ENCODE measurements at regions of chr15 and their contacts with region 1.

Region 1: GRCh38 chr15:35545824-35546510 is at the start of gene DPH6:
- DNase-seq: peak; percentile 87
- ATAC-seq: peak; percentile 89
- H3K4me3 Mint-ChIP-seq: peak within 1 kb of the TSS; percentile 95
- H3K27ac Mint-ChIP-seq: peak within 1 kb of the TSS; percentile 99
- H3K4me1 Mint-ChIP-seq: peaks cover 23% of the 10 kb centered on the region
- H3K27me3 Mint-ChIP-seq: no peaks in the 10 kb centered on the region
- total RNA-seq, gene DPH6: 8.1 to 14.0 TPM

Region 2: GRCh38 chr15:34437687-34438086 is 1108.3 kb before region 1 on chr15 and contains the start of gene GOLGA8A:
- CTCF ChIA-PET with region 1: no interaction called
- POLR2A ChIA-PET with region 1: no interaction called
- intact Hi-C with region 1: loop called in 1 of 2 experiments (anchors 5 kb)
- DNase-seq: peak; percentile 94
- ATAC-seq: peak; percentile 85
- H3K4me3 Mint-ChIP-seq: peak within 1 kb of the TSS; percentile 86
- H3K27ac Mint-ChIP-seq: peak within 1 kb of the TSS; percentile 95
- H3K4me1 Mint-ChIP-seq: peaks cover 18% of the 10 kb centered on the region
- H3K27me3 Mint-ChIP-seq: peaks cover under 1% of the 10 kb centered on the region
- total RNA-seq, gene GOLGA8A: 147 to 165 TPM

Region 3: DNA sequence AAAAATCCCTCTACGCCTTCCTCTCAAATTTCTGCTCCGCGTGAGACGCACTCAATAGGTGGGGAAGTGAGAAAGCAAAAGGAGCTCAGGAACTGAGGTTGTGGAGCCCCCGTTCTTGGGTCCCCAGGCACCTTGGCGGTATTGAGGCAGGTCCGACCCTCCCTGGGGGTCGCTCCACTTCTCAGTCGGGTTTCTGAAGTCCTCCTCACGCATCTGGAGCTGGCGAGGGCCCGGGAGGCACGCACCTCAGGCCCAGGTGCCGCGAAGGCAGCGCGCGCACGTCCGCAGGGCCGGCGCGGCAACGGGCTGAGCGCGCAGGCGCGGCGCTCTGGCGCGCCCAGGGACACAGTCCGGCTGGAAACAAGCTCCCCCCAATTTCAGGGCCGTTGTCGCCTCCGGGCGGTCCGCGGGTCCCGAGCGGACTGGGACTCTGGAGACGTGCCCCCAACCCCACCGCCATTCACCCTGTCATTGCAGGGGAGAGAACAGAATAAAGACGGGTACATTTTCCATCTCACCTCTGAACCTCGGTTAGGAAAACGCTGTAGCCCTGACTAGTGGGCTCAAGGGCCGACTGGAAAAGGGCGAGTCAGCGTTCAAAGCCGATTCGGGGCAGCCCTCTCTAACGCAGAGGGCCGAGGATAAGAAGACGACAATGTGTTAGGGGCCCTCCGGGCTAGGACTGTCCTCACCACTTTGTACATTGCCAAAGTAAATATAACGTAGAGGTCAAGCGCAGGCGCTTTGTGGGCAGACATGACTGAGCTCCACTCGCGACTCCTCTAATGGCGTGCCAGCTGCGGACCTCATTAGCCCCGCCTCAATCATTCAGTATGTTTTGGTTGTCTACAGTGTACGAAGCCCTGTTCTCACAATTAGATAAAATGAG is 557.7 kb before region 1 on chr15 and contains the start of gene ZNF770:
- CTCF ChIA-PET with region 1: no interaction called
- POLR2A ChIA-PET with region 1: no interaction called
- intact Hi-C with region 1: loop called (anchors 1 to 5 kb)
- DNase-seq: peak; percentile 88
- ATAC-seq: peak; percentile 87
- H3K4me3 Mint-ChIP-seq: peak within 1 kb of the TSS; percentile 97
- H3K27ac Mint-ChIP-seq: peak within 1 kb of the TSS; percentile 98
- H3K4me1 Mint-ChIP-seq: peaks cover 35% of the 10 kb centered on the region
- H3K27me3 Mint-ChIP-seq: no peaks in the 10 kb centered on the region
- total RNA-seq, gene ZNF770: 64.1 to 65.1 TPM

Region 4: GRCh38 chr15:35557544-35557943 is 11.6 kb after region 1 on chr15:
- CTCF ChIA-PET with region 1: no interaction called
- POLR2A ChIA-PET with region 1: interaction called, 10 read pairs
- intact Hi-C with region 1: no loop called
- DNase-seq: peak; percentile 8
- ATAC-seq: peak; percentile 88
- H3K4me3 Mint-ChIP-seq: no peak overlapping the region
- H3K27ac Mint-ChIP-seq: peak overlapping the region; percentile 27
- H3K4me1 Mint-ChIP-seq: peaks cover 11% of the 10 kb centered on the region
- H3K27me3 Mint-ChIP-seq: peaks cover 2% of the 10 kb centered on the region

Region 5: GRCh38 chr15:35657679-35658311 is 111.8 kb after region 1 on chr15:
- CTCF ChIA-PET with region 1: no interaction called
- POLR2A ChIA-PET with region 1: no interaction called
- intact Hi-C with region 1: loop called (anchors 1 to 5 kb)
- DNase-seq: peak; percentile 65
- ATAC-seq: peak; percentile 94
- H3K4me3 Mint-ChIP-seq: no peak overlapping the region
- H3K27ac Mint-ChIP-seq: no peak overlapping the region
- H3K4me1 Mint-ChIP-seq: peaks cover 9% of the 10 kb centered on the region
- H3K27me3 Mint-ChIP-seq: peaks cover 16% of the 10 kb centered on the region

Region 6: DNA sequence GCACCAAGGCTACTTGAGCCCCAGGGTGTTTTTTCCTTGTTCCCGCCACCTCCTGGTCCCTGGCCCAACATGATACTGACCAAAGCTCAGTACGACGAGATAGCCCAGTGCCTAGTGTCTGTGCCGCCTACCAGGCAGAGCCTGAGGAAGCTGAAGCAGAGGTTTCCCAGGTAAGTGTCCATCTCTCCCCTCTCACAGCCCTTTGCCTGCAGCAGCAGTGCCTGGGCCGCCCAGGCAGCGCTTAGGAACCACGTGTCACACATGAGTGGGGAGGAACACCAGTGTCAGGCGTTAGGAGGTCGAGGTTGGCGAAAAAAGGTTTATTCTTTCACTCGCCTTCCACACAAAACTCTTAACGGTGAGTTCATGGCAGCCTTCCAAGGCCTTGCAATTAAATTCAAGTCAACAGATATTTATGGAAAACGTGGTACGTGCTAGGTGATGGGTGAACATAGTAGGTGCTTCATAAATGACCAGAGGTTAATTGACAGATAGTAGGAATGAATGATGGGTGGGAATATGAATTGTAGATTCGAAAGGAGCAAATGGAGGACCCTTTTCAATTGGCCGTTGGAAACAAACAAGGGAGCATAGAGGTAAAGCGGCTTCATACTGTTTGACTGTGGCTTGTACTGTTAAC is 1033.9 kb after region 1 on chr15:
- CTCF ChIA-PET with region 1: no interaction called
- POLR2A ChIA-PET with region 1: no interaction called
- intact Hi-C with region 1: loop called (anchors 1 to 5 kb)
- DNase-seq: peak; percentile 53
- ATAC-seq: peak; percentile 23
- H3K4me3 Mint-ChIP-seq: peak overlapping the region; percentile 81
- H3K27ac Mint-ChIP-seq: peak overlapping the region; percentile 93
- H3K4me1 Mint-ChIP-seq: peaks cover 24% of the 10 kb centered on the region
- H3K27me3 Mint-ChIP-seq: peaks cover 2% of the 10 kb centered on the region

Region 7: GRCh38 chr15:37100109-37100965 is 1554.4 kb after region 1 on chr15 and contains the start of gene MEIS2:
- CTCF ChIA-PET with region 1: no interaction called
- POLR2A ChIA-PET with region 1: no interaction called
- intact Hi-C with region 1: loop called in 1 of 2 experiments (anchors 2 kb)
- DNase-seq: peak; percentile 70
- ATAC-seq: peak; percentile 63
- H3K4me3 Mint-ChIP-seq: peak within 1 kb of the TSS; percentile 80
- H3K27ac Mint-ChIP-seq: peak within 1 kb of the TSS; percentile 51
- H3K4me1 Mint-ChIP-seq: peaks cover 37% of the 10 kb centered on the region
- H3K27me3 Mint-ChIP-seq: peaks cover 82% of the 10 kb centered on the region
- total RNA-seq, gene MEIS2: not detected